GM10248 (cell line): ENCODE measurements at regions of chr13 and their contacts with region 1.

Region 1: GRCh38 chr13:102291587-102292218 is 110.1 kb downstream of the FGF14 start:
- DNase-seq: no peak
- CTCF ChIP-seq: no peak

Region 2: DNA sequence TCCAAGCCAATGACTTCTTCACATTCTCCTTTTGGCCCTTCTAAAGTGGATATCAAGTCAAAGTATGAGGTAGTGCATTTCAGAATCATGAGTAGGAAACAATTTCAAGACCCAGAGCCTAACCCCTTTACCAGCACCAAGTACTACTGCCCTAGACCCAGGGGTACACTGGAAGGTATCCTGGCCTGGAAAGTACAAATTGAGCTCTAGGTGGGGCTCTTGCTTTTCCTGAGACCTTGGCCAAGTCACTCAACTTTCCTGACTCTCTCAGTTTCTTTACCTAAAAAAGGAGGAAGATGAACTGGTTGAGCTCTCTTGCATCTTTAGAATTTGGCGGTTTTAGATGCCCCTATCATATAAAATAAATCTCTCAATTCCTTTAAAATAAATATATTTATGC is 94.5 kb before region 1 on chr13:
- CTCF ChIA-PET with region 1: no interaction called
- POLR2A ChIA-PET with region 1: no interaction called
- DNase-seq: no peak
- CTCF ChIP-seq: peak; percentile 10

Region 3: DNA sequence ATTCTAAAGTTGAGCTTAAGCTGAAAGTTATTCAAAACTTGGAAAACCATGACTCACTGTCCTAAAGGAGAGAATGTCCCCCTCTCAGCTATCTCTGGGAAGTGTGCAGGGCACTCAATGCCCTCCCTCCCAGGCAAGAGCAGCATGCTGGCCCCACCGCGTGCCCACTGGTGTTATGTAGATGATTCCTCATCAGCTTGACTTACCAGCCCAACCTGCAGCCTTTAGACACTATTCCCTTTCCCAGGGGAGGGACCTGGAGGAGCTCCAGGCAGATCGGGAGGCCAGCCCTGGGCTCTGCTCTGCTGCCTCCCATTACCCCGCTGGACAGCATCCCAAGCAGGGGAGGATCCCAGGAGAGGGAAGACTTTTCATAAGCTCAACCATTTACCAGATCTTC is 14.4 kb before region 1 on chr13:
- CTCF ChIA-PET with region 1: interaction called, 16 read pairs
- POLR2A ChIA-PET with region 1: no interaction called
- DNase-seq: no peak
- CTCF ChIP-seq: no peak